ENCODE measurements at regions of chr9 and their contacts with region 1.

Region 1: GRCh38 chr9:130467371-130467770 is 22.6 kb downstream of the ASS1 start:
- DNase-seq: no peak
- H3K4me3 ChIP-seq: no peak overlapping the region
- H3K27ac ChIP-seq: no peak overlapping the region
- H3K4me1 ChIP-seq: peaks cover 0 to 11% (median 0%) of the 10 kb centered on the region in 4 experiments; a peak in 3 of 7 replicates
- H3K27me3 ChIP-seq: no peaks in the 10 kb centered on the region
- CTCF ChIP-seq: no peak
- EP300 ChIP-seq: no peak
- POLR2A ChIP-seq: no peak
- RAD21 ChIP-seq: no peak

Region 2: GRCh38 chr9:130382636-130383349 is 84.6 kb before region 1 on chr9:
- CTCF ChIA-PET with region 1: no interaction called
- POLR2A ChIA-PET with region 1: no interaction called
- DNase-seq: no peak
- H3K4me3 ChIP-seq: no peak overlapping the region
- H3K27ac ChIP-seq: no peak overlapping the region
- H3K4me1 ChIP-seq: no peaks in the 10 kb centered on the region; a peak in 1 of 7 replicates
- H3K27me3 ChIP-seq: no peaks in the 10 kb centered on the region
- CTCF ChIP-seq: no peak
- EP300 ChIP-seq: no peak
- POLR2A ChIP-seq: no peak
- RAD21 ChIP-seq: no peak

Region 3: GRCh38 chr9:130414910-130415746 is 52.2 kb before region 1 on chr9:
- CTCF ChIA-PET with region 1: no interaction called
- POLR2A ChIA-PET with region 1: no interaction called
- DNase-seq: no peak
- H3K4me3 ChIP-seq: no peak overlapping the region
- H3K27ac ChIP-seq: no peak overlapping the region
- H3K4me1 ChIP-seq: no peaks in the 10 kb centered on the region
- H3K27me3 ChIP-seq: no peaks in the 10 kb centered on the region; a peak in 1 of 7 replicates
- CTCF ChIP-seq: no peak
- EP300 ChIP-seq: no peak
- POLR2A ChIP-seq: no peak
- RAD21 ChIP-seq: no peak

Region 4: GRCh38 chr9:130480331-130481072 is 13.1 kb after region 1 on chr9:
- CTCF ChIA-PET with region 1: interaction called, 136 read pairs
- POLR2A ChIA-PET with region 1: interaction called, 3 read pairs
- DNase-seq: peak; percentile 19 to 83
- H3K4me3 ChIP-seq: no peak overlapping the region
- H3K27ac ChIP-seq: no peak overlapping the region
- H3K4me1 ChIP-seq: peaks cover 0 to 2% (median 0%) of the 10 kb centered on the region in 4 experiments; a peak in 2 of 7 replicates
- H3K27me3 ChIP-seq: no peaks in the 10 kb centered on the region
- CTCF ChIP-seq: peak in 2 of 3 experiments; percentile 82 to 88; a peak in 3 of 4 replicates
- EP300 ChIP-seq: no peak
- POLR2A ChIP-seq: no peak
- RAD21 ChIP-seq: peak; percentile 81 to 85

Region 5: DNA sequence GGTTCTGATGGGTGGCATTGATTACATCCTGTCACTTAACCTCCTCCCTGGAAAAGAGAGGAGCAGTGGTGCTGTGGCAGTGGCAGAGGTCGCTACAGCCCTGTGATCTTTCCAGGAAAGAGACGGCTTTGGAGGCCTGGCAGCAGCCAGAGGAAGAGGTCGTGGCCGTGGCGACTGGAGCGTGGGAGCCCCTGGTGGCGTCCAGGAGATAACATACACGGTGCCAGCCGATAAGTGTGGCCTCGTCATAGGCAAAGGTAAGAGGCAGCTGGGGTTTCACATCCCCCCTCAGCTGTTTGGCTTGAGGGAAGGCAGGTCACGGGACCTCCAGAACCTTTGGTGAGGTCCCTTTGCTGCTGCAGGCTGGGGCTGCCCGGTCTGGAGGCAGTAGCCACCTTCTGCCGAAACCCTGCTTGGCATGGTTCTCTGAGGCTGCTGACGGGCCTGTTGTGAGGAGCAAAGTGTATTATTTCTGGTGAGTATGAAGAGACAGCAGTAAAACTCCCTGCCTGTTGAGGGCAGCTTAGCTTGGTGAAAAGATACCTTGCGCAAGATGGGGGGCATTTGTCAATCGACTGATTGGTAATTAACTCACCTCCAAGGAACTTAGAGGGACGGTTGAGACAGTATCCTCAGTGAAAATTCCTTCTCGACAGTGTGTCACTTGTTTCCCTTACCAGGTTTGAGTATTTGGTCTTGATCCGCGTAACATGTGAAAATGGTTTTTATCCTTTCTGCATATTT is 159.1 kb after region 1 on chr9:
- CTCF ChIA-PET with region 1: interaction called, 30 read pairs
- POLR2A ChIA-PET with region 1: no interaction called
- DNase-seq: no peak
- H3K4me3 ChIP-seq: no peak overlapping the region
- H3K27ac ChIP-seq: no peak overlapping the region; the same call in 1 of the 2 replicates
- H3K4me1 ChIP-seq: peaks cover 12 to 27% (median 18%) of the 10 kb centered on the region in 4 experiments
- H3K27me3 ChIP-seq: no peaks in the 10 kb centered on the region
- CTCF ChIP-seq: peak in 2 of 3 experiments; percentile 17 to 43; a peak in 2 of 4 replicates
- EP300 ChIP-seq: no peak
- POLR2A ChIP-seq: no peak
- RAD21 ChIP-seq: peak; percentile 45 to 51

Region 6: DNA sequence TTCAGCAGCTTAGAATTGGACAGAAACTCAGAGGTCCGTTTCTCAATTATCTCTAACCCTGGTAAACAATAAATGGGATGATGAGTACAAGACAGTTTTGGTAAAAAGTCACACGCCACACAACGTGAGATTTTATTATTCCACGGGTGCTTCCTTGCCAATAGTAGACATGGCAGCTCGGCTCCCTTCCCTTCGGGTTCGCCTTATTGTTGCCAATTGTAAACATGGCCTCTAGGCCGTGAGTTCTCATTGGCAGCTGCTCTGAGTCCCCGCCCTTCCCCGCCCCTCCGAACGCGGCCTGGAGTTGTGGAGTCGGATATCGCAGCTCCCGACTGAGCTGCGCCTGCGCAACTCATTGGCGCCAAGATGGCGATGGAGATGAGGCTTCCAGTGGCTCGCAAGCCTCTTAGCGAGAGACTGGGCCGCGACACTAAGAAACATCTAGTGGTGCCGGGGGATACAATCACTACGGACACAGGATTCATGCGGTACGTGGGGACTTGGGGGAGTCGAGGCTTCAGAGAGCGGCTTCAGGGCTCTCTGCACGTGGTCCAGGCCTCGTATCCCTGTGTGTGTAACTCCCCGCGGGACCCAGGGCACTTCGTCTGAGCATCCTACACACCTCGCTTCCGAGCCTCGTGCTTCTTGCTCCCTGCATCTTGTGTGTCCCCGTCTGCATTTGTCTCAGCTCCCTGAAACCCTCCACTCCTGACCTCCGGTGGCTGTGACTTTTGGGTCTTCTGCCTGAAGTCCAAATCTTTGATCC is 226.2 kb after region 1 on chr9 and contains the start of gene EXOSC2:
- CTCF ChIA-PET with region 1: interaction called, 36 read pairs
- POLR2A ChIA-PET with region 1: interaction called, 5 read pairs
- DNase-seq: peak; percentile 86 to 90
- H3K4me3 ChIP-seq: peak within 1 kb of the TSS; percentile 94 to 100 (median 98)
- H3K27ac ChIP-seq: peak within 1 kb of the TSS; percentile 89
- H3K4me1 ChIP-seq: peaks cover 4 to 9% (median 6%) of the 10 kb centered on the region in 4 experiments; a peak in 6 of 7 replicates
- H3K27me3 ChIP-seq: no peaks in the 10 kb centered on the region
- CTCF ChIP-seq: no peak
- EP300 ChIP-seq: no peak
- POLR2A ChIP-seq: peak; percentile 90 to 92
- RAD21 ChIP-seq: no peak
- total RNA-seq, gene EXOSC2: 84.3 and 93.6 TPM in 2 replicates